ENCODE measurements at regions of chr9 and their contacts with region 1.

Region 1: GRCh38 chr9:32571969-32572899 is 725 bp downstream of the NDUFB6 start:
- DNase-seq: no peak
- H3K4me3 ChIP-seq: peak overlapping the region; percentile 98
- CTCF ChIP-seq: peak; percentile 75

Region 2: DNA sequence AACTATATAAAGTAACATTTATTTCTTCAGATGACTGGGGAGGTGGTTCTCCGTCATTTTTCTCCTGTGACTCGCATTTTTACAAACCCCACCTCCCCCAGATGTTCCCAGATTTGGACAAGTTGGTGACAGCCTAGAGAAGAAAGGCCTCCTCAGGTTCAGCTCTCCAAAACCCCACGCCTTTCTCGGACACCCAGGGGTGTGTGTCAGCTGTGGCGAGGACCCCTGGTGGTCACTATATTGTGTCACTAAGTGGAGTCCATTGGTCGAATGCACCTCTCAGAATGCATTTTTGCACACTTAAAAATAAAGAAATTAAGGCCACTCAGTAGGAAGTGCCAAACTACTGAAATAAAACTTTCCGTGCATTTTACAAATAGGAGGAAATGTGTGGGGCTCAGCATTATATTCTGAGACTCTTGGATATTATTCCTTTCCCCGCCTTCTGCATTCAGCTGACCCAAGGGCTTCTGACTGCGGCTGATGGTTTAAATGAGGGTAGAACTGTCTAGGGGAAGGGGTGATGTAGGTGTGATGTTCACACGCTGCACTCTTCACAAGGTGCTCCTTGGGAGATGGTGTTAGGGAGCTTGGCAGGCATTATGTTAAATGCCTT is 140.2 kb before region 1 on chr9:
- CTCF ChIA-PET with region 1: interaction called, 75 read pairs
- POLR2A ChIA-PET with region 1: interaction called, 3 read pairs
- DNase-seq: no peak
- H3K4me3 ChIP-seq: no peak overlapping the region
- CTCF ChIP-seq: peak; percentile 53

Region 3: GRCh38 chr9:32550562-32551433 is 21.4 kb before region 1 on chr9:
- CTCF ChIA-PET with region 1: interaction called, 24 read pairs
- POLR2A ChIA-PET with region 1: interaction called, 5 read pairs
- DNase-seq: peak; percentile 45
- H3K4me3 ChIP-seq: peak overlapping the region; percentile 82
- CTCF ChIP-seq: peak; percentile 4

Region 4: DNA sequence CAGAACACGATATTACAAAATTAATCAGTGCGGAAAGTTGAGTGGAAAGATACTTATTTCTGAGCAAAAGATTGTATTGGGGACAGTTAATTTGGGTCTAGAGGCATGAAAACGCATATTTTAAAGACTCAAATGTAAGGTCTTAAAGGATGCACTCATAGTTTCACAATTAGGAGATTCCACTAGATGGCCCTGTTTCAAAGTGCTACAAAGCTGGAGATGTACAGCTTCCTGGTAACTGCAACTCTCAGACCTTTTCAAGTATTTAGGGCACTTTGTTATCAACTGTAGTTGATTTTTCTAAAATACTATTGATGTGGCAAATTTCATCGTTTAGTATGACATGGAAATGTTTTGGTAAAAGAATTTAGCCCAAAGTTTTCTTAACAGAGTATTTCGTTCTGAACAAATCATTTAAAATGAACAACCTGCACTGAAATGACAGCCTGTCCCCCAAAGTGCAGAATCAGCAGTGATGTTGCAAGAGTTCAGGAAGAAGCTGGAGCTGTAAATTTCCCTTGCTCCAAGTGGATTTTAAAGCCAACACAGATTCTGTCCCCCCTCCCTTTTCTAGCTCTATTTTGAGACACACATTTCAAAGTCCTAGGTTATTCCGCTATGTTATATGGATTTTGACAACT is 17.0 kb after region 1 on chr9:
- CTCF ChIA-PET with region 1: interaction called, 112 read pairs
- POLR2A ChIA-PET with region 1: no interaction called
- DNase-seq: no peak
- H3K4me3 ChIP-seq: no peak overlapping the region
- CTCF ChIP-seq: peak; percentile 61

Region 5: GRCh38 chr9:32603914-32604741 is 31.9 kb after region 1 on chr9:
- CTCF ChIA-PET with region 1: no interaction called
- POLR2A ChIA-PET with region 1: no interaction called
- DNase-seq: no peak
- H3K4me3 ChIP-seq: no peak overlapping the region
- CTCF ChIP-seq: no peak

Region 6: GRCh38 chr9:32968101-32969011 is 396.1 kb after region 1 on chr9:
- CTCF ChIA-PET with region 1: interaction called, 928 read pairs
- POLR2A ChIA-PET with region 1: no interaction called
- DNase-seq: no peak
- H3K4me3 ChIP-seq: no peak overlapping the region
- CTCF ChIP-seq: peak; percentile 51